Activated CD4-positive, alpha-beta memory T cell treated with anti-CD3 and anti-CD28 coated beads for 36 hours (primary cell): ENCODE measurements at regions of chr6 and their contacts with region 1.

Region 1: GRCh38 chr6:100472674-100473073 is 8.0 kb upstream of the SIM1 start:
- DNase-seq: peak; percentile 70
- H3K4me3 Mint-ChIP-seq: no peak overlapping the region
- H3K27ac Mint-ChIP-seq: no peak overlapping the region
- H3K4me1 Mint-ChIP-seq: peaks cover 13% of the 10 kb centered on the region
- H3K27me3 Mint-ChIP-seq: peaks cover 69% of the 10 kb centered on the region

Region 2: GRCh38 chr6:99613409-99613704 is 859.3 kb before region 1 on chr6:
- CTCF ChIA-PET with region 1: no interaction called
- POLR2A ChIA-PET with region 1: no interaction called
- intact Hi-C with region 1: loop called (anchors 2 kb)
- DNase-seq: peak; percentile 59
- H3K4me3 Mint-ChIP-seq: no peak overlapping the region
- H3K27ac Mint-ChIP-seq: no peak overlapping the region
- H3K4me1 Mint-ChIP-seq: peaks cover 25% of the 10 kb centered on the region
- H3K27me3 Mint-ChIP-seq: peaks cover 78% of the 10 kb centered on the region

Region 3: DNA sequence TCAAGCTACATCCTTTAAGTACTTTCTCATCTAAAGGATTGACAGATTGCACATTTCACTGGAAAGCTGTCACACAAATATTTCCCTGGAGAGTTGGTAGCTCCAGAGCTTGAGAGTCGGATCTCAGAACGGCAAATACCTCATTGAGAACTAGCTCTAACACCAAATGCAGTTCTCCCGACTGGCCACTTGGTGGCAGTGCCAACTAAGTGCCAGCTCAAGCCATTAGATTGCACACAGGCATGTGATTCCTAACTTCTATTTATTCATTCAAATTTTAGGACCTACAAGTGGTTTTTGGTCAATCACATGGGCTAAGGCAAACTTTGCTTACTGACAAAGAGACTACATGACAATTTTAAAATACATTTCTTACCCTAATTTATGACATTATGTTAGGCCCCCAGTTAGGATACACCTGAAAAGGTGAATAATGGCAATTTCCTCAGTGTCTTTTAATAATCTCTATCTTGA is 470.7 kb before region 1 on chr6:
- CTCF ChIA-PET with region 1: interaction called, 30 read pairs
- POLR2A ChIA-PET with region 1: no interaction called
- intact Hi-C with region 1: no loop called
- DNase-seq: peak; percentile 48
- H3K4me3 Mint-ChIP-seq: no peak overlapping the region
- H3K27ac Mint-ChIP-seq: no peak overlapping the region
- H3K4me1 Mint-ChIP-seq: no peaks in the 10 kb centered on the region
- H3K27me3 Mint-ChIP-seq: peaks cover 23% of the 10 kb centered on the region

Region 4: GRCh38 chr6:100171533-100172321 is 300.9 kb before region 1 on chr6:
- CTCF ChIA-PET with region 1: no interaction called
- POLR2A ChIA-PET with region 1: no interaction called
- intact Hi-C with region 1: loop called (anchors 5 kb)
- DNase-seq: peak; percentile 14
- H3K4me3 Mint-ChIP-seq: no peak overlapping the region
- H3K27ac Mint-ChIP-seq: no peak overlapping the region
- H3K4me1 Mint-ChIP-seq: peaks cover 4% of the 10 kb centered on the region
- H3K27me3 Mint-ChIP-seq: peaks cover 1% of the 10 kb centered on the region

Region 5: GRCh38 chr6:100228831-100229641 is 243.6 kb before region 1 on chr6:
- CTCF ChIA-PET with region 1: no interaction called
- POLR2A ChIA-PET with region 1: no interaction called
- intact Hi-C with region 1: loop called (anchors 2 kb)
- DNase-seq: peak; percentile 78
- H3K4me3 Mint-ChIP-seq: peak overlapping the region; percentile 66
- H3K27ac Mint-ChIP-seq: peak overlapping the region; percentile 86
- H3K4me1 Mint-ChIP-seq: peaks cover 26% of the 10 kb centered on the region
- H3K27me3 Mint-ChIP-seq: peaks cover 25% of the 10 kb centered on the region

Region 6: GRCh38 chr6:100678027-100678426 is 205.4 kb after region 1 on chr6:
- CTCF ChIA-PET with region 1: no interaction called
- POLR2A ChIA-PET with region 1: no interaction called
- intact Hi-C with region 1: no loop called
- DNase-seq: no peak
- H3K4me3 Mint-ChIP-seq: no peak overlapping the region
- H3K27ac Mint-ChIP-seq: no peak overlapping the region
- H3K4me1 Mint-ChIP-seq: no peaks in the 10 kb centered on the region
- H3K27me3 Mint-ChIP-seq: no peaks in the 10 kb centered on the region